Activated CD8-positive, alpha-beta T cell treated with anti-CD3 and anti-CD28 coated beads, Interleukin-2, amount 10 ng/mL, durations not matched to agents 7 days and 5 days (primary cell): ENCODE measurements at regions of chr17 and their contacts with region 1.

Region 1: DNA sequence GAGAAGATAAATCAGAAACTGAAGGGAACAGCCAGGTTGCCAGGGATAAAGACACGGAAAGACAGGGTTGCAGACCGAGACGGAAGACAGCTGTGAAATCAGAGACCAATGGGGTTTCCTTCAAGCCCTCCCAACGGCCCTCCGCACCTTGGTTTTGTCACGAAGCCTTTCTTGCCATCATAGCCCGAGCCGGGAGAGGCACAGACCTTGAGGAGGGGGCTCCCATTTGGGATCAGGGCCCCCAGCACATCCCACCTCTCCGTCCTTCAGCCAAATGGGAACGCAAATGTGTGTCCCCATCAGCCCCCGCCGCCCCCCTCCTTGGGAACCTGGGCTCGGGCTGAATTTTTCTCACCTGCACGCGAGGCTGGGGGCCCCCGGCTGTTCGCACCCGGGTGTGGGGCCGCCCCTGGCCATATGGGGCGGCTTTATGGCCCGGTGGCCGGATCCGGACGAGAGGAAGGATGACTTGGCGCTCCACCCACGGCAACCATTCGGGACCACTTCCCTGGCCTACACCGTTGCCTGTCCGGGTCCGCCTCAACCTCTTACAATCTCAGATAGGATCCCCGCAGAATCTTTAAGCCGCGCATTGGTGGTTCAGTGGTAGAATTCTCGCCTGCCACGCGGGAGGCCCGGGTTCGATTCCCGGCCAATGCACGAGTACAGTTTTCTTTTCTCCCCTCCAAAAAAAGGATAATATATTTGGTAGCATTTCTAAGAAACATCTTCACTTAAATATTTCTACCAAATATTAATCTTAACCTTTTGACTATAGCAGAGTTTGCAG is 1.4 kb upstream of the HES7 start:
- DNase-seq: peak; percentile 90
- ATAC-seq: peak; percentile 35
- H3K4me3 Mint-ChIP-seq: peak overlapping the region; percentile 88
- H3K27ac Mint-ChIP-seq: peak overlapping the region; percentile 88
- H3K4me1 Mint-ChIP-seq: peaks cover 57% of the 10 kb centered on the region
- H3K27me3 Mint-ChIP-seq: peaks cover 44% of the 10 kb centered on the region

Region 2: GRCh38 chr17:7897773-7898172 is 227.6 kb before region 1 on chr17:
- CTCF ChIA-PET with region 1: no interaction called
- POLR2A ChIA-PET with region 1: no interaction called
- DNase-seq: no peak
- ATAC-seq: no peak
- H3K4me3 Mint-ChIP-seq: no peak overlapping the region
- H3K27ac Mint-ChIP-seq: peak overlapping the region; percentile 0
- H3K4me1 Mint-ChIP-seq: peaks cover 12% of the 10 kb centered on the region
- H3K27me3 Mint-ChIP-seq: no peaks in the 10 kb centered on the region

Region 3: DNA sequence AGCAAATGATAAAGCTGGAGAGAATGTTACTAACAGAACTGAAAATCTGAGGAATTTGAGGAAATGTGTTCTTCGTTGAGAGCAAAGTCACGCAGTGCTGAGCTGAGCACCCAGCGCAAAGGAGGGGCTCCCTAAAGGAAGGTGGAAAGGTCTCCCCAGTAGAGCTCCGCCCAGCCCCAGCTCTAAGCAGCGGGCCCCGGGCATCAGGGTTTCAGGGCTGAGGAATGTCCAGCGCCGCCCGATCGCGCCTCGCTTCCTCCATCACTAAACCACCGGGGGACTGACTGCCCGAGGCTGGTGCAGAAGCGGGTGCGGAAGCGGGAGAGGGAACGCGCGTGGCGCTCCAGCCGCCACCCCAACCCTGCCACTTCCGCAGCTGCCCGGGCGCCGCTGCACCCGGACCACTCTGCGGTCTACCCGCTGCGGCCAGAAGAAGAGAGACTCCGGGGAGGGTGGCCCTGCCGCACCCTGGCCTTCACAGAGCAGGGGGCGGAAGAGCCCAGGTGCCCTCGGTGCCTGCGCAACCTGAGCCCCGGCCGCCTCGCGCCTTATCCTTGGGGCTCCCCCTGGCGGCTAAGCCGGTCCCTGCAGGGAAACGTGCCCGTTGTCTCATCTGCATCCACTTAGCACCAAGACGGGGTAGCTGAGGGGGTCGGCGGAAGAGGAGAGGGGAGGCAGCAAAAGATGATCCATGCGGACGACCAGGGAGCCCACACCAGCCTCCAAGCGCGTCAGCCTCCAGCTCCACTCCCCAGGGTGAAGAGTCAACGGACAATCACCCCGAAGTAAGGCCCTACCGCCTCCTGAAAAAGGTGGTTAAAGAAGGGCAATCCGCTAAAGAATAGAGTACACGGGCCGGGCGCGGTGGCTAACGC is 135.3 kb before region 1 on chr17:
- CTCF ChIA-PET with region 1: no interaction called
- POLR2A ChIA-PET with region 1: no interaction called
- DNase-seq: peak; percentile 93
- ATAC-seq: peak; percentile 91
- H3K4me3 Mint-ChIP-seq: peak overlapping the region; percentile 77
- H3K27ac Mint-ChIP-seq: peak overlapping the region; percentile 88
- H3K4me1 Mint-ChIP-seq: peaks cover 35% of the 10 kb centered on the region
- H3K27me3 Mint-ChIP-seq: peaks cover 16% of the 10 kb centered on the region

Region 4: GRCh38 chr17:8156246-8156992 is 31.1 kb after region 1 on chr17:
- CTCF ChIA-PET with region 1: interaction called, 72 read pairs
- POLR2A ChIA-PET with region 1: interaction called, 20 read pairs
- DNase-seq: peak; percentile 100
- ATAC-seq: peak; percentile 82
- H3K4me3 Mint-ChIP-seq: no peak overlapping the region
- H3K27ac Mint-ChIP-seq: no peak overlapping the region
- H3K4me1 Mint-ChIP-seq: peaks cover 36% of the 10 kb centered on the region
- H3K27me3 Mint-ChIP-seq: no peaks in the 10 kb centered on the region

Region 5: DNA sequence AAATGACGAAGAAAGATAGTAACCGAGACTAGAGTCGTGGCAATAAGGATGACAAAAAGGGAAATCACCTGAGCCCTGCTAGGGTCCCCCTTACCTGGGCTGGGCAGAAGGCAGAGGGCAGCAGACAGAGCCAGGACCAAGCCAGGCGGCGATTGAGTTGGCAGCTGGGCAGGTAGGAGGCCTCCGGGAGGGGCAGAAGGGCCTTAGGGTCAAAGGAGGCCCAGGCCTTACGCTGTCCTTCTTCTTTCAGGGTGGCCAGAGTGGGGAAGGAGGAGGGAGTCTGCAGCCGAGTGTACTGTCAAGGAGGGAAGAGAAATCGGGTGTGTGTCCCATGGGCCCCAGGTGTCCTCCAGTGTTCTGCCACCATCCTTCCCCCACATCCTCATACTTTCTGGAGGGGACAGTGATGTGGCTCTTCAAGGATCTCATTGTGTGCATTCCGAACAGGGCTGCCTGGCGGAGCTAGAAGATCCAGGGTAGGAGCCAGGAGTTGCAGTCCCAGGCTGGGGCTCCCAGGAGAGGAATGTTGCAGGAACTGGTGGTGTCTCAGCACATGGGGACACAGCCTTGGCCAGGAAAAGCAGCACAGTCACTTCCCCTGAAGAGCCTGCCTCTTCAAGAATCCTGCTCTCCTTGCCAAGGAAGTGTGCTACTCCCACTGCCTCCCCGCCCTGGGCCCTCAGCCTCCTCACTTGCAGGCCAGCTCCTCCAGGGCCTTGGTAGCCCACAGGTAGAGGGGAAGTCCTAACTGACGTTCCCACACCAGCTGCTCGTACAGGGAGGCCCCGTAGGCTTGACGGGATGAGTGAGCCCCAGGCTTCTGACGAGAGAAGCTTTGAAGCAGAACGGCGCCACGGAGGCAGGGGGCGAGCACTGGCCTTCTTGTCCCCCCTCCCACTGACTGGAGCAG is 109.3 kb after region 1 on chr17:
- CTCF ChIA-PET with region 1: no interaction called
- POLR2A ChIA-PET with region 1: no interaction called
- DNase-seq: no peak
- ATAC-seq: no peak
- H3K4me3 Mint-ChIP-seq: no peak overlapping the region
- H3K27ac Mint-ChIP-seq: no peak overlapping the region
- H3K4me1 Mint-ChIP-seq: peaks cover 3% of the 10 kb centered on the region
- H3K27me3 Mint-ChIP-seq: no peaks in the 10 kb centered on the region